Naive thymus-derived CD4-positive, alpha-beta T cell (primary cell): ENCODE measurements at regions of chr17 and their contacts with region 1.

Region 1: GRCh38 chr17:62703775-62704378 is 76.4 kb downstream of the MRC2 start:
- DNase-seq: peak; percentile 31 to 81 (median 71)
- ATAC-seq: peak; percentile 96
- H3K4me3 ChIP-seq: peak overlapping the region; percentile 43
- H3K4me3 Mint-ChIP-seq: peak overlapping the region in 8 of 10 donors; percentile 25 to 77 (median 51)
- H3K27ac ChIP-seq: no peak overlapping the region
- H3K27ac Mint-ChIP-seq: no peak overlapping the region
- H3K4me1 ChIP-seq: peaks cover 5 to 9% of the 10 kb centered on the region in 2 donors
- H3K4me1 Mint-ChIP-seq: peaks cover 0 to 7% (median 4%) of the 10 kb centered on the region in 7 donors
- H3K27me3 ChIP-seq: no peaks in the 10 kb centered on the region
- H3K27me3 Mint-ChIP-seq: peaks cover 0 to 39% (median 6%) of the 10 kb centered on the region in 5 donors

Region 2: DNA sequence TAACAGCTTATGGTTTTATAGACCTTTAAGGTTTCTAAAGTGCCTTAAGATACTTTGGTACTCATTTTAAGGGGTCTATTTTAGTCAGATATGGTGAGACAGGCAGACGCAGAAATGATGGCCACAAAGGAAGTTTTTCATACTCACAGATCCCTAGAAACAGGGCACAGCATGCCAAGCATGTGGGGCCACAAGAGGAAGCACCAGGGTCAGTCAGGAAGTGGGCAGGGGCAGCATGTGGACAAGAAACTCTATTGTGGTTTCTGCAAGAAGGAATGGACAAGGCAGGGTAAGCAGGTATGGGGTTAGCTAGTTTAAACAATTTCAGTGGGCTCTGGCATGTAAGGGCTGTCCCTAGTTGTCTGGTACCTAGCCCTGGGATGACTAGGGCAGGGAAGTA is 315.0 kb before region 1 on chr17:
- CTCF ChIA-PET with region 1: no interaction called
- POLR2A ChIA-PET with region 1: no interaction called
- intact Hi-C with region 1: no loop called
- DNase-seq: no peak
- ATAC-seq: no peak
- H3K4me3 ChIP-seq: no peak overlapping the region
- H3K4me3 Mint-ChIP-seq: no peak overlapping the region
- H3K27ac ChIP-seq: no peak overlapping the region
- H3K27ac Mint-ChIP-seq: no peak overlapping the region
- H3K4me1 ChIP-seq: no peaks in the 10 kb centered on the region
- H3K4me1 Mint-ChIP-seq: peaks cover 0 to 1% (median 0%) of the 10 kb centered on the region in 7 donors
- H3K27me3 ChIP-seq: no peaks in the 10 kb centered on the region
- H3K27me3 Mint-ChIP-seq: peaks cover 9 to 44% (median 22%) of the 10 kb centered on the region in 5 donors

Region 3: DNA sequence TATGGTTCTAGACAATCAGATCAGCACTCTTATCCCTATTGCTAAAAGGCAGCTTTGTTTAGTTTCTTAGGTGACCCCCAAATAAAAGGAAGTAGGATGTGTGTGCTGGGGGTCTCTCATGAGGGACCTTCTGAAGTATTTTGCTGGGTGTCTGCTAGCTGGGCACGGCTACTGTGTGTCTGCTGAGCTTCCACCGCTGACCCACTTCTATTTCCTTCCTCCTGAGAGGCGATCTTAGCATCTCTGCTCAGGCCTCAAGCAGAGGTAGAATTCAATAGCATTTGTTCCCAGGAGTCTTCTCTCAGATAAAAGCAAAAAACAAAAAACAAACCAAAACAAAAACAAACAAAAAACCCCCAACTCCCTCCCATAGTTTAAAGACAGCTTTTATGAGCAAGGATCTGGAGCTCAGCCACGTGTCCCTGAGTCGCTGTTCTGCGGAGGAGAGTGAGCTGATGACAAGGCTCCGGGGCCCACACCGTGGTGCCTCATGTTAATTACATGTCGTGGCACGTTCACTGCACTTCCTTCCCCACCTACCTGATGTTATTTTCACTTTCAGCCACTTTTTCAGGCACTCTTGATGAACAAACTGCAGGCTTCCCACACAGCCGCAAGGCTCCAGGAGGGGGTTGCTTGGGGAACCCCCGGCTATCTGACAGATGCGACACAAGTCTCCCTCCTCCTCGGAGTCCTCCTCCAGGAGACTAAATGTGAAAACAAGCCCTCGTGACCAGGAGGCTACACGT is 20.7 kb after region 1 on chr17:
- CTCF ChIA-PET with region 1: interaction called, 6 read pairs
- POLR2A ChIA-PET with region 1: no interaction called
- intact Hi-C with region 1: loop called (anchors 1 kb)
- DNase-seq: peak; percentile 20 to 75 (median 64)
- ATAC-seq: peak; percentile 94
- H3K4me3 ChIP-seq: peak overlapping the region; percentile 19
- H3K4me3 Mint-ChIP-seq: peak overlapping the region; percentile 51 to 89 (median 82)
- H3K27ac ChIP-seq: peak overlapping the region; percentile 41
- H3K27ac Mint-ChIP-seq: peak overlapping the region; percentile 75 to 99 (median 96)
- H3K4me1 ChIP-seq: peaks cover 9 to 19% of the 10 kb centered on the region in 2 donors
- H3K4me1 Mint-ChIP-seq: peaks cover 16 to 26% (median 20%) of the 10 kb centered on the region in 7 donors
- H3K27me3 ChIP-seq: no peaks in the 10 kb centered on the region
- H3K27me3 Mint-ChIP-seq: peaks cover 0 to 76% (median 5%) of the 10 kb centered on the region in 5 donors